ENCODE measurements at regions of chr2 and their contacts with region 1.

Region 1: GRCh38 chr2:160472839-160473251 is 20.8 kb downstream of the RBMS1 start:
- DNase-seq: no peak
- ATAC-seq: no peak
- H3K4me3 ChIP-seq: no peak overlapping the region
- H3K4me3 Mint-ChIP-seq: no peak overlapping the region
- H3K27ac ChIP-seq: no peak overlapping the region
- H3K27ac Mint-ChIP-seq: no peak overlapping the region
- H3K4me1 ChIP-seq: peaks cover 31% of the 10 kb centered on the region
- H3K4me1 Mint-ChIP-seq: peaks cover 66% of the 10 kb centered on the region
- H3K27me3 ChIP-seq: no peaks in the 10 kb centered on the region
- H3K27me3 Mint-ChIP-seq: no peaks in the 10 kb centered on the region
- CTCF ChIP-seq: no peak

Region 2: DNA sequence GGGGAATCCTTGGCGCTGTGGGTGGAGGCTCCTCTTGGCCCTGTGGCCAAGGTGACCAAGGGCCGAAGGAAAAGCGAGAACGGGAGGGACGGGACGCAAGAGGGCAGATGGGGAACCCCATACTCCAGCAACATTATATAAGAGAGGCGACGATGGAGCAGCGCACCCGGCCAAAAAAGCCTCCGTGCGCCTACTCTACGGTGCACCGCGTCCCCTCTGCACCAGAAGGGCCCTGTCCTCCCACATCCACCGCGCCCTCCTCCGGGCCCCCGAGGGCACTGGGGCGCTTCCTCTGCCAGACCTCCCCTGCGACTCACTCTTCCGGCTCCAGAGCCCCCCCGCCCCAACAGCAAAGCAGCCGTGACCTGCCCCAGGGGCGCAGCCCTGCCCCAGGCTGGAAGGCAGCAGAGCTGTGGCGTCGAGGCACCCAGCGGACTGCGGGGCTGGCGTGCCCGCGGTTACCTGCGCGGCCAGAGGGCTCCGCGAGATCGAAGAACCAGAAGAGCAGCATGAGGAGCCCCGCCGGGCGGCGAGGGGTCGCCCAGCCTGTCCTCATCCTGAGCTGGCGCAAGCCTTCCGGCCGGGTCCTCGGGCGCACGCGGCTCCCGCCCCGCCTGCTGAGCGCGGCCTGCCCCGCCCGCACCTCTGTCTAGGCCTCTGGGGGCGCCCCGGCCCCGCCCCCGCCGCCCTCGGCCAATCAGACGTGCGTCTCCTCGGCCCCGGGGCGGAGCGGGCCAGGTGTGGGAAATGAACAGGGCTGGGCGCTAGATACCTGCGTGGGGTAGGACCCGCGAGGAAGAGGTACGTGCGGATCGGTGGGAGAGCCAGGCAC is 568.5 kb before region 1 on chr2:
- CTCF ChIA-PET with region 1: no interaction called
- POLR2A ChIA-PET with region 1: no interaction called
- intact Hi-C with region 1: no loop called
- DNase-seq: peak; percentile 68 to 90 (median 81)
- ATAC-seq: peak; percentile 81
- H3K4me3 ChIP-seq: peak within 1 kb of the TSS; percentile 91 to 97
- H3K4me3 Mint-ChIP-seq: peak within 1 kb of the TSS; percentile 98
- H3K27ac ChIP-seq: peak within 1 kb of the TSS; percentile 90 to 94
- H3K27ac Mint-ChIP-seq: peak within 1 kb of the TSS; percentile 98
- H3K4me1 ChIP-seq: peaks cover 12% of the 10 kb centered on the region
- H3K4me1 Mint-ChIP-seq: peaks cover 46% of the 10 kb centered on the region
- H3K27me3 ChIP-seq: no peaks in the 10 kb centered on the region
- H3K27me3 Mint-ChIP-seq: no peaks in the 10 kb centered on the region
- CTCF ChIP-seq: no peak

Region 3: GRCh38 chr2:160505256-160505655 is 32.4 kb after region 1 on chr2:
- CTCF ChIA-PET with region 1: no interaction called
- POLR2A ChIA-PET with region 1: no interaction called
- intact Hi-C with region 1: loop called in 1 of 2 experiments (anchors 5 kb)
- DNase-seq: no peak
- ATAC-seq: no peak
- H3K4me3 ChIP-seq: no peak overlapping the region
- H3K4me3 Mint-ChIP-seq: no peak overlapping the region
- H3K27ac ChIP-seq: no peak overlapping the region
- H3K27ac Mint-ChIP-seq: no peak overlapping the region
- H3K4me1 ChIP-seq: peaks cover 8% of the 10 kb centered on the region
- H3K4me1 Mint-ChIP-seq: peaks cover 20% of the 10 kb centered on the region
- H3K27me3 ChIP-seq: no peaks in the 10 kb centered on the region
- H3K27me3 Mint-ChIP-seq: no peaks in the 10 kb centered on the region
- CTCF ChIP-seq: no peak

Measured in CD8-positive, alpha-beta T cell (primary cell).